ENCODE measurements at regions of chr18 and their contacts with region 1.

Region 1: DNA sequence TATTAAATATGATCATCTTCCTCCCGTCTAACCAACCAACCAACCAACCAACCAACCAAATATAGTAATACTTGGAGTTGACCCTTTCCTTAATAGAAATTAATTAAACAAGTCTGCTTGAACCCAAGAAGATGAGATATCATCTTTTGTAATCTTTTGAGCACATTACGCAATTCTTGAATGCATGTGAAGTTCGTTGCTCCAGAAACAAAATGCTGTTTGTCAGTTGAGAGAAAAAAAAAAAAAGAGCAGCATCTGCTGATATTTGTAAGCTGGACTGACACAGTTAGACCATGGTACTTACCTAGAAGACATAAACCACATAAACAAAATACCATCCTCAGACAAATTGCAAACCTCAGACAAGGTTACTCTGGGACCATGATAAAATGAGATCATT is 9.2 kb upstream of the SERPINB2 start:
- DNase-seq: no peak
- ATAC-seq: no peak
- H3K4me3 ChIP-seq: no peak overlapping the region
- H3K27ac ChIP-seq: no peak overlapping the region
- H3K4me1 ChIP-seq: no peaks in the 10 kb centered on the region
- H3K27me3 ChIP-seq: no peaks in the 10 kb centered on the region
- CTCF ChIP-seq: no peak

Region 2: DNA sequence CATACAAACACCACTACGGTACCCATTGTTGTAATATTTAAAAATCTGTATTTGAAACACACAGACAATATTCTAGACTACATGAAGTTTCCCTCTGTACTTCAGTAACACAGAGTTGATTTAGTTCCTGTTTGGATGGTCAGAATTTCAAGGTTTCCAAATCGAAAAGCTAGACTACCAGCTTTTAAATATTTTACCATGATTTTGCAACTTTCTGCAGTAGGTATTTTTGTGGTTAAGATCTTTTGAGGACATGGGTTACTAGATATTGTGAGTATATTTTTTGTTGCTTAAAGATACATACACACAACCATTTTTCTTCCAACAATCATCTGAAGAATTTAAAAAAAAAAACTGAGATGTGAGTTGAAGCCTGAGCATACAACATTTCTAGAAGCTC is 390.7 kb before region 1 on chr18:
- CTCF ChIA-PET with region 1: no interaction called
- POLR2A ChIA-PET with region 1: interaction called, 11 read pairs
- in situ Hi-C with region 1: no loop called
- intact Hi-C with region 1: no loop called
- DNase-seq: no peak
- ATAC-seq: no peak
- H3K4me3 ChIP-seq: no peak overlapping the region
- H3K27ac ChIP-seq: no peak overlapping the region
- H3K4me1 ChIP-seq: no peaks in the 10 kb centered on the region
- H3K27me3 ChIP-seq: no peaks in the 10 kb centered on the region
- CTCF ChIP-seq: no peak

Region 3: DNA sequence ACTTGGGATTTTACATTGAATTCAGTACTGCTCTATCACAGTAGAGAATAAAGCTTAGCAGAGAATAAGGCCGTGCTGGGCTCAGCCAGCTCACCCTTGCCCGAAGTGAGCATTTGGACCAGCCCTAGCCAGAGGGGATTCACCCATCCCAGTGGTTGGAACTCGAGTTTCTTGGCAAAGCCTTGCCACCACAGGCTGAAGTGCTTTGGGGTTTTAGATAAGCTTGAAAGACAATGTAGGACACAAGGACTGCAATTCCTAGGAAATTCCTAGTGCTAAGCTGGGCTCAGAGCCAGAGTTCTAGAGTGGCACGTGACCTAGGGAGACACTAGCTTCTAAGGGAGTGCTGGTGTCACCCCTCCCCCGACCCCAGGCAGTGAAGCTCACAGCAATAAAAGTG is 147.6 kb before region 1 on chr18:
- CTCF ChIA-PET with region 1: no interaction called
- POLR2A ChIA-PET with region 1: no interaction called
- in situ Hi-C with region 1: no loop called
- intact Hi-C with region 1: no loop called
- DNase-seq: no peak
- ATAC-seq: no peak
- H3K4me3 ChIP-seq: no peak overlapping the region
- H3K27ac ChIP-seq: no peak overlapping the region
- H3K4me1 ChIP-seq: no peaks in the 10 kb centered on the region
- H3K27me3 ChIP-seq: no peaks in the 10 kb centered on the region
- CTCF ChIP-seq: no peak

Region 4: DNA sequence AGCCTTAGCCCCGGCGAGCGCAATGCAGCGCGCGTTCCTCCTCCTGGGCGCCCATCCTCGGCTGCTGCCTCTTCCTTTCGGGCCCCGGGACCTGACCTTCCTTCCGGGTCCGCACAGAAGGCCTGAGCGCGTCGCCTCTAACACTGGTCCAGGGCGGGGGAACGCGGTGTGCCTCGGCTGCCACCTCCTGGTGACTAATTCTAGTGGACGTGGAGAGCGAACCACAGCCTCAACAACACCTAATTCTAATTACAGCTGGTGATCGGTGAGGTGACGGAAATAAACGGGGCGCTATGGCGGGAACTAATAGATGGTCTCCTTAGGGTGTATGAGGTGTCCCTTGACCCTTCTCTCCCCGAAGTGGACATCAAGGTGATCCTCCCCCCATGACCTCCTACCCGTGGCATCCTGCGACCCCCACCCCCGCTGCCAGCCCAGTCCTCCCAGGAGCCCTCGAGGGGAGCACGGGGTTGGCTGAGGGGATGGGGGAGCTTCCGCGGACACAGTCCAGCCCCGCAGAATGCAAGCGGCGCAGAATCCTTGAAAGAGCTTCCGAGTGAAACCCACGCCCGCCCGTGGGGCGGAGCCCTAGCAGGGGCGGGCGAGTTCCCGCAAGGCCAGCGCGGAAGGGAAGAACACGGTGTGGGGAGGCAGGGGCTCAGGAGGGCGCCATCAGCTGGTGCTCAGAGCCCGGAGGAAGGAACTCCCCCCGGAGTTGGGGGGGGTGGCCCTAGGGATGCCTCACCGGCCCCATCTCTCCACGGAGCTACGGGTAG is 58.0 kb after region 1 on chr18:
- CTCF ChIA-PET with region 1: no interaction called
- POLR2A ChIA-PET with region 1: no interaction called
- in situ Hi-C with region 1: no loop called
- intact Hi-C with region 1: no loop called
- DNase-seq: peak; percentile 22
- ATAC-seq: peak; percentile 99
- H3K4me3 ChIP-seq: peak overlapping the region; percentile 27 to 45
- H3K27ac ChIP-seq: no peak overlapping the region
- H3K4me1 ChIP-seq: no peaks in the 10 kb centered on the region; the same call in 1 of the 2 replicates
- H3K27me3 ChIP-seq: peaks cover 5% of the 10 kb centered on the region; the same call in 1 of the 2 replicates
- CTCF ChIP-seq: peak; percentile 76